Esophagus muscularis mucosa (tissue), 4 donors: ENCODE measurements at regions of chr10 and their contacts with region 1.

Region 1: DNA sequence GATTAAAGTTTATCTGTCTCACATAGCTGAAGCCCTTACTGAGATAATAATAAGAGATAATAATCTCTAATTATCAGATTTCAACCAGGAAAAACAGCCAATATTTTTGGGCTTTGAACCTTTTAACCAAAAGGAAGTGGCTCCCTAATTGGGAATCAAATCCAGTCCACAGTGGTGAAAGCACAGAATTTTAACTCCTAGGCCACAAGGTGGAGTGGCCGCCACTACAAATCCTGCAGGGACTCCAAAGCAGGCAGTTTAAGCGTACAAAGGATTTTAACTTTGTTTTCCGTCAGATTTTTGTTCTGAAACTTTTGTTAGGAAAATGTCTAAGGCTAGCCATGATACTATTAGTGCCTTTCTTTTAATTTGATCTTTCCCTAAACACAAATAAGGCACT is 99.6 kb upstream of the CCNY start:
- DNase-seq: no peak
- H3K4me3 ChIP-seq: no peak overlapping the region
- H3K27ac ChIP-seq: no peak overlapping the region
- H3K4me1 ChIP-seq: no peaks in the 10 kb centered on the region
- H3K27me3 ChIP-seq: no peaks in the 10 kb centered on the region
- CTCF ChIP-seq: peak in 1 of 3 experiments; percentile 15
- EP300 ChIP-seq: no peak
- POLR2A ChIP-seq: no peak

Region 2: GRCh38 chr10:33476757-33477273 is 1759.9 kb before region 1 on chr10:
- intact Hi-C with region 1: no loop called
- DNase-seq: peak; percentile 64
- H3K4me3 ChIP-seq: no peak overlapping the region
- H3K27ac ChIP-seq: no peak overlapping the region
- H3K4me1 ChIP-seq: no peaks in the 10 kb centered on the region
- H3K27me3 ChIP-seq: no peaks in the 10 kb centered on the region
- CTCF ChIP-seq: no peak
- EP300 ChIP-seq: no peak
- POLR2A ChIP-seq: no peak

Region 3: DNA sequence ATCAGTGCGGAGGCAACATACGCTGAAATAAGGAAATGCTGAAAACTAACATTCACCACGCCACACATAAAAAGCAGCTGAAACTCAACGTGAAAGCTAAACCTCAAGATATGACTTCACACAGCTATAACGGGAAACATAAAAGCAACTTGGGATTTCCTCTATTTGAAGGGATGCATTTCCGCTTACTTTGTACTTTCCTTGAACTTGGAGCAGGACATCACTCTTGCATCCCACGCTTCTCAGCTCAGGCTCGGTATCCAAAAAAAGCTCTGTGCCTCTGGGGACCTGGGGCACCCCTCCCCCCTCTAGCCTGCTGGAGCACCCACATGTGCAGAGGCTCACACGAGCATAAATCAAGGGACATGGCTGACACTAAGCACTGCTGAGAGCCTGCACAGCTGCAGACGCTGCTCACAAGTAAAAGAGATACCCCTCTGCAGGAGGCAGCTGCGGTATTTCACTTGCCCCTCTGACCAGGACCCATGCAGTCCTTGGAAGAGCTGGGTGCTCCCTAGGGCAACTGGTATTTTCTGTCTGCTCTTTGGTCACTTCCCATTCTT is 455.8 kb before region 1 on chr10:
- intact Hi-C with region 1: no loop called
- DNase-seq: no peak
- H3K4me3 ChIP-seq: peak overlapping the region; percentile 4 to 20 (median 14)
- H3K27ac ChIP-seq: peak overlapping the region; percentile 67 to 75 (median 70)
- H3K4me1 ChIP-seq: peaks cover 43 to 97% (median 96%) of the 10 kb centered on the region in 4 donors
- H3K27me3 ChIP-seq: no peaks in the 10 kb centered on the region
- CTCF ChIP-seq: no peak
- EP300 ChIP-seq: no peak
- POLR2A ChIP-seq: no peak

Region 4: DNA sequence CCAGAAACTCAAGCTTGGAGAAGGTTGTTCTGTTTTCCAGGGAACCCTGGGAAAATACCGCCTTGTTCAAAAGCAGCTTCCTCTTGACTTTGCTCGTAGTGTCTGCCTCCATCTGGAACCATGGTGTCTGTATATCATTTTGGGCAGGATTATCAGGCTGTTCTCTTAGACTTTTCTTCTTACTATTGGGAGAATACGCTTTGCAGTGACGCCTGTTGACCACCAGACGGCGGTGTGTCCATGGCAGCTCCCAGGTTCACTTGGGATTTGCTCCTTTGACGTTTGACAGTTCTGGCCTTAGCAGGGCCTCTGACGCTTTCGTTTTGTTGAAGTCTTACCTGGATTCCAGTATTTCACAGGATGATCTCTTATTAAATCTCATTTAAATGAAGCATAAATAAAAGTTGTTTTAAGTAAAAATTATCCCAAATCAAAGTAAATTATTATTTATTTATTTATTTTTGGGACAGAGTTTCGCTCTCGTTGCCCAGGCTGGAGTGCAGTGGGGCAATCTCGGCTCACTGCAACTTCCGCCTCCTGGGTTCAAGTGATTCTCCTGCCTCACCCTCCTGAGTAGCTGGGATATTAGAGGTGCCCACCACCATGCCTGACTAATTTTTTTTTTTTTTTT is 326.6 kb after region 1 on chr10:
- intact Hi-C with region 1: loop called (anchors 10 kb)
- DNase-seq: peak; percentile 92
- H3K4me3 ChIP-seq: no peak overlapping the region
- H3K27ac ChIP-seq: no peak overlapping the region
- H3K4me1 ChIP-seq: peaks cover 35 to 37% (median 36%) of the 10 kb centered on the region in 4 donors
- H3K27me3 ChIP-seq: no peaks in the 10 kb centered on the region
- CTCF ChIP-seq: peak; percentile 84 to 99 (median 91)
- EP300 ChIP-seq: no peak
- POLR2A ChIP-seq: no peak

Region 5: GRCh38 chr10:35735412-35735811 is 498.7 kb after region 1 on chr10:
- intact Hi-C with region 1: no loop called
- DNase-seq: peak; percentile 64
- H3K4me3 ChIP-seq: no peak overlapping the region
- H3K27ac ChIP-seq: no peak overlapping the region
- H3K4me1 ChIP-seq: no peaks in the 10 kb centered on the region
- H3K27me3 ChIP-seq: no peaks in the 10 kb centered on the region
- CTCF ChIP-seq: no peak
- EP300 ChIP-seq: no peak
- POLR2A ChIP-seq: no peak